ENCODE measurements at regions of chr10 and their contacts with region 1.

Region 1: GRCh38 chr10:24642622-24643417 is 80.9 kb downstream of the ARHGAP21 start:
- ATAC-seq: peak in 6 of 8 experiments; percentile 27 to 98 (median 70)
- H3K4me3 ChIP-seq: no peak overlapping the region
- H3K27ac ChIP-seq: no peak overlapping the region
- H3K4me1 ChIP-seq: no peaks in the 10 kb centered on the region

Region 2: GRCh38 chr10:25080880-25081581 is 438.2 kb after region 1 on chr10:
- in situ Hi-C with region 1: loop called in 2 of 9 experiments (anchors 25 kb)
- ATAC-seq: peak; percentile 96 to 99 (median 98)
- H3K4me3 ChIP-seq: no peak overlapping the region
- H3K27ac ChIP-seq: no peak overlapping the region
- H3K4me1 ChIP-seq: no peaks in the 10 kb centered on the region

Region 3: DNA sequence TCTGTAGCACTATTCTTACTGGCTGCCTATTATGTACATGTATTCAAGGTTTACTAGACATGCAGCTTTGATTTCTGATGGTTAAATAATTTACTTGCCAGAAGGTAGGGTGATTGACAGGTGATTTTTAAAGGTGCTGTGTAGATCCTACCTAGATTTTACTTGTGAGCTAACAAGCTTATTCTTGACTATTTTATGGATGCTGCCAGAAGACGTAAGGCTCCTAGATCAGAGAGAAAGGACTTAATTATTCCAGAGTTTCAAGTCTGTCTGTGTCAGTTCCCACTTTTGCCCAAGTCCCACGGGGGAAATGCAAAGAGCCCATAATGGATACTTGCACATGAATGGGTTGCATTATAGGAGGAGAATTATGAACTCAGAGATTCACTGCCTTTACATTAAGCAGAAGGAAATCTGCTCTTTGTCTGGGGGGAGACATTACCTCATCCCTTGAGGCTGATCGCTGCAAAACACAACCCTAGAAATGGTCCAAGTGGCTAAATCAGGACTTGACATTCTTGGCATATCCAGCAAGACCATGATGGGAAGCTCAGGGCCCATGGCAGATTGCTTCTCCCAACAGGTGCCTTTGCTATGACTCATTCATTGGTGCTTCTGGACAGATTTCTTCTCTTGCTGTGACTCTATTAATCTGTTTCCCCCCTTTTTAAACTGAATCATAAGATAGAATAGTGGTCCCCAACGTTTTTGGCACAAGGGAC is 564.0 kb after region 1 on chr10:
- in situ Hi-C with region 1: no loop called
- ATAC-seq: no peak
- H3K4me3 ChIP-seq: no peak overlapping the region
- H3K27ac ChIP-seq: no peak overlapping the region
- H3K4me1 ChIP-seq: no peaks in the 10 kb centered on the region